SK-N-SH (cell line): ENCODE measurements at regions of chr7 and their contacts with region 1.

Region 1: GRCh38 chr7:128209229-128210035 is 31.6 kb upstream of the LEP start:
- DNase-seq: peak; percentile 93
- H3K4me3 ChIP-seq: no peak overlapping the region
- H3K27ac ChIP-seq: no peak overlapping the region
- H3K4me1 ChIP-seq: peaks cover 0 to 3% of the 10 kb centered on the region in 2 experiments; a peak in 1 of 4 replicates
- H3K27me3 ChIP-seq: no peaks in the 10 kb centered on the region
- CTCF ChIP-seq: peak; percentile 99
- EP300 ChIP-seq: no peak
- RAD21 ChIP-seq: peak; percentile 100

Region 2: GRCh38 chr7:127578036-127578684 is 631.3 kb before region 1 on chr7:
- CTCF ChIA-PET with region 1: interaction called, 78 read pairs
- POLR2A ChIA-PET with region 1: no interaction called
- DNase-seq: peak; percentile 61
- H3K4me3 ChIP-seq: no peak overlapping the region; a peak in 1 of 4 replicates
- H3K27ac ChIP-seq: peak overlapping the region; percentile 47 to 77
- H3K4me1 ChIP-seq: peaks cover 8 to 40% of the 10 kb centered on the region in 2 experiments; a peak in 3 of 4 replicates
- H3K27me3 ChIP-seq: no peaks in the 10 kb centered on the region
- CTCF ChIP-seq: peak; percentile 49
- EP300 ChIP-seq: no peak; a peak in 1 of 4 replicates
- RAD21 ChIP-seq: peak; percentile 58

Region 3: DNA sequence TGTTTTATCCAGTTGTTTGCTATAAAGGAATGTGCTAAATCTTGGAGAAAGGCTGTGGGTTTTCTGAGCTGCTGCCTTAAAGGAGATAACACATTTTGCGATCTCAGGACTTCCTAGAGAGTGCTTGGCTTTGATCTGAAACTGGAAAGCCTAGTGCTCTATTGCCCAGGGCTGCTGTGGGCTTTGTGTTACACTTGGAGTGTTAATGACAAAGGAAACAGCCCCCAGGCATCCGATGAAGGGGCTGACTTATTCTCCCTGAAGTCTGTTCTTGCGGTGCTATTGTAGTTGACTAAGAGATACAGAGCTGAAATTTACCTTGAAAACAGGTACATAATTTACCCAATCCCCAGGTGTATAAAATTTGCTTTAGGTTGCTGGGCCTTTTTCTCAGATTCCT is 483.0 kb before region 1 on chr7:
- CTCF ChIA-PET with region 1: interaction called, 18 read pairs
- POLR2A ChIA-PET with region 1: no interaction called
- DNase-seq: no peak
- H3K4me3 ChIP-seq: no peak overlapping the region
- H3K27ac ChIP-seq: no peak overlapping the region
- H3K4me1 ChIP-seq: peaks cover 0 to 10% of the 10 kb centered on the region in 2 experiments; a peak in 2 of 4 replicates
- H3K27me3 ChIP-seq: no peaks in the 10 kb centered on the region
- CTCF ChIP-seq: no peak
- EP300 ChIP-seq: no peak
- RAD21 ChIP-seq: no peak

Region 4: DNA sequence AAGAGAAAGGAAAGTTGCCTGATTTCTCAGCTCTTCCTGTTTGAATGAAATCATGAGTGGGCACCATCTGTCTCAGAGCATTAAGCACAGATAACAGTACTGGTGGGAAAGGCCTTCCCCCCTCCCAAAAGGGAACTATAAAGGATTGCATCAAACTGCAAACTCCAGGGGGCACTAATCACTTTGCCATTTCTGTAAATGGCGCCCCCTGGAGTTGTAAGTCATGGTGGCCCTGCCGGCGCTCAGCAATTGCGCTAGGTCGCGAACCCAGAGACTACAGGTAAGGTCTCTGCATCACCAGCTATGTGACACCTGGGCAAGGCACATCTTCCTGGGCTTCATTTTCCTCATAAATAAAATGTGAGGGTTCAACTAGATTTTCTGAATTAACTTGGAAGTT is 189.3 kb before region 1 on chr7:
- CTCF ChIA-PET with region 1: interaction called, 63 read pairs
- POLR2A ChIA-PET with region 1: no interaction called
- DNase-seq: peak; percentile 32
- H3K4me3 ChIP-seq: no peak overlapping the region; a peak in 1 of 4 replicates
- H3K27ac ChIP-seq: no peak overlapping the region
- H3K4me1 ChIP-seq: peaks cover 35 to 61% of the 10 kb centered on the region in 2 experiments
- H3K27me3 ChIP-seq: no peaks in the 10 kb centered on the region
- CTCF ChIP-seq: peak; percentile 63
- EP300 ChIP-seq: no peak
- RAD21 ChIP-seq: 0 out of 2 replicates have a peak, but pooled peaks have one; percentile 22

Region 5: GRCh38 chr7:128076796-128077271 is 132.6 kb before region 1 on chr7:
- CTCF ChIA-PET with region 1: interaction called, 33 read pairs
- POLR2A ChIA-PET with region 1: no interaction called
- DNase-seq: peak; percentile 71
- H3K4me3 ChIP-seq: no peak overlapping the region
- H3K27ac ChIP-seq: peak overlapping the region in 1 of 2 experiments; percentile 62; a peak in 2 of 4 replicates
- H3K4me1 ChIP-seq: peaks cover 0 to 60% of the 10 kb centered on the region in 2 experiments; a peak in 2 of 4 replicates
- H3K27me3 ChIP-seq: no peaks in the 10 kb centered on the region
- CTCF ChIP-seq: no peak
- EP300 ChIP-seq: peak in 1 of 2 experiments; percentile 31; a peak in 1 of 4 replicates
- RAD21 ChIP-seq: 0 out of 2 replicates have a peak, but pooled peaks have one; percentile 5

Region 6: GRCh38 chr7:128129224-128129864 is 80.1 kb before region 1 on chr7:
- CTCF ChIA-PET with region 1: interaction called, 162 read pairs
- POLR2A ChIA-PET with region 1: no interaction called
- DNase-seq: no peak
- H3K4me3 ChIP-seq: no peak overlapping the region
- H3K27ac ChIP-seq: no peak overlapping the region
- H3K4me1 ChIP-seq: no peaks in the 10 kb centered on the region
- H3K27me3 ChIP-seq: peaks cover 33% of the 10 kb centered on the region; the same call in 1 of the 2 replicates
- CTCF ChIP-seq: no peak
- EP300 ChIP-seq: no peak
- RAD21 ChIP-seq: no peak

Region 7: GRCh38 chr7:128190051-128190647 is 19.3 kb before region 1 on chr7:
- CTCF ChIA-PET with region 1: interaction called, 175 read pairs
- POLR2A ChIA-PET with region 1: no interaction called
- DNase-seq: no peak
- H3K4me3 ChIP-seq: no peak overlapping the region
- H3K27ac ChIP-seq: no peak overlapping the region
- H3K4me1 ChIP-seq: no peaks in the 10 kb centered on the region
- H3K27me3 ChIP-seq: peaks cover 4% of the 10 kb centered on the region; the same call in 1 of the 2 replicates
- CTCF ChIP-seq: no peak
- EP300 ChIP-seq: no peak
- RAD21 ChIP-seq: no peak

Region 8: GRCh38 chr7:128366300-128366699 is 156.9 kb after region 1 on chr7:
- CTCF ChIA-PET with region 1: no interaction called
- POLR2A ChIA-PET with region 1: no interaction called
- DNase-seq: no peak
- H3K4me3 ChIP-seq: no peak overlapping the region
- H3K27ac ChIP-seq: peak overlapping the region in 1 of 2 experiments; percentile 100; a peak in 2 of 4 replicates
- H3K4me1 ChIP-seq: peaks cover 0 to 33% of the 10 kb centered on the region in 2 experiments; a peak in 2 of 4 replicates
- H3K27me3 ChIP-seq: peaks cover 40% of the 10 kb centered on the region
- CTCF ChIP-seq: no peak
- EP300 ChIP-seq: no peak
- RAD21 ChIP-seq: no peak

Region 9: GRCh38 chr7:128378637-128379036 is 169.2 kb after region 1 on chr7:
- CTCF ChIA-PET with region 1: no interaction called
- POLR2A ChIA-PET with region 1: no interaction called
- DNase-seq: peak; percentile 59
- H3K4me3 ChIP-seq: no peak overlapping the region
- H3K27ac ChIP-seq: peak overlapping the region in 1 of 2 experiments; percentile 64; a peak in 2 of 4 replicates
- H3K4me1 ChIP-seq: peaks cover 0 to 25% of the 10 kb centered on the region in 2 experiments; a peak in 1 of 4 replicates
- H3K27me3 ChIP-seq: peaks cover 9% of the 10 kb centered on the region; the same call in 1 of the 2 replicates
- CTCF ChIP-seq: no peak
- EP300 ChIP-seq: no peak
- RAD21 ChIP-seq: no peak